Posterior cingulate gyrus (tissue), 11 donors: ENCODE measurements at regions of chr7 and their contacts with region 1.

Region 1: DNA sequence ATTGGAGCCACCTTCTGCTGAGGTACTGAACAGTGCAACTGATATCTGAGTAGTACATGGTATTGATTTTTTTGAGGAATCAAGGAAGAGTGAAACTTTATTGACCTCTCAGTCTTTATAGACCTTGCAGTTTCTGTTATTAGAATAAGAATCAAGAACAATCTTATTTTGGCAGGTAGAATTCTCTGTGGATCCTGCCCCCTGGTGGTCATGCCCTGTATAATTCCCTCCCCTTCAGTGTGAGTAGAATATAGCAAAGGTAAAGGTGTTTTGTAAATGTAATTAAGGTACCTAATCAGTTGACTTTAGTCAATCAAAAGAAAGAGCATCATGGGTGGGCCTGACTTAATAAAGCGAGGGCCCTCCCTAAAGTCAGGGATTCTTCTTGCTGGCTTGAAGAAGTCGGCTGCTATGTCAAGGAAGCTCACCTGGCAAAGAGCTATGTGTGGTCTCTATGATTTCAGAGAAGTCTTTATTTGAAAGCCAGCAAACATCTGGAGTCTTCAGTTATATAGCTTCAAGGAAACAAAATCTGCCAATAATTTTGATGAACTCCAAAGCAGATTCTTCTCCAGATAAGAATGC is 142.8 kb downstream of the LSM5 start:
- DNase-seq: peak in 2 of 10 donors; percentile 22 to 38

Region 2: GRCh38 chr7:32093415-32094408 is 253.6 kb before region 1 on chr7:
- intact Hi-C with region 1: no loop called
- DNase-seq: no peak

Region 3: DNA sequence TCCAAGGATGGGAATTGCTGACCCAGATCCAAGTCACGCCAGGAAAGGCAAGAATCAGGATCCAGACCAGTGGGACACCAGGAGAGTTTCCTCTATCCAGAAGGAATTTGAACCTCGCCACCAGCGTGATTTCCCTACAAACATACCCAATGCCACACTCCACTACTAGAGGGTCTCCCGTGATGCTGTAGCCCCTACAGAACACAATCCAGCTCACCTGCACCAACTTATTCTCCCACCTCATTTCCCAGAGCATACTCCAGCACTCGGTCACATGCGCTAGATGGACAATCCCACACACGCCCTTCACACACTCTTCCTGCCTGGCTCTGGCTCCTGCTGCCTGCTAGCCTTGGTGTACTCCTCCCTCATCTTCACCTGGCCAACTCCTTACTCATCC is 135.0 kb before region 1 on chr7:
- intact Hi-C with region 1: loop called (anchors 2 kb)
- DNase-seq: no peak